Cardiac septum (tissue), 1 donor: ENCODE measurements at regions of chr5 and their contacts with region 1.

Region 1: DNA sequence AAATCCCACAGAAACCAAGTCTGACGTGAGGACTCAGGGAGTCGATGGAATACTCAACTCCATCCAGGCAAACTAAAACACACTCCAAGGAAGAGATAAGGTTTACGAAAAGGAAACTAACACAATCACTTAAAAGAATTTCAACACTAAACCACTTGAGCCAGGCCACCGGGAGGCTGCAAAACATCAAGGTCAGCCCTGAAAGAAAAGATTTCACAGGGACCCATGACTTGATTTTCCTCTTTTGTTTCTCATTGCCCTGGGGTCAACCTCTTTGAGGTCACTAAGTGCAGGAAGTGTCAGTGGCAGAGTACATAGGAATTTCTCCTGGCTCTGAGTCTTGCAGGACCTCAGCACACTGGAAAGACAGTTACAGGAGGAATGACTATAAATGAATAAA is 77.8 kb upstream of the TARS1 start:
- DNase-seq: no peak

Region 2: DNA sequence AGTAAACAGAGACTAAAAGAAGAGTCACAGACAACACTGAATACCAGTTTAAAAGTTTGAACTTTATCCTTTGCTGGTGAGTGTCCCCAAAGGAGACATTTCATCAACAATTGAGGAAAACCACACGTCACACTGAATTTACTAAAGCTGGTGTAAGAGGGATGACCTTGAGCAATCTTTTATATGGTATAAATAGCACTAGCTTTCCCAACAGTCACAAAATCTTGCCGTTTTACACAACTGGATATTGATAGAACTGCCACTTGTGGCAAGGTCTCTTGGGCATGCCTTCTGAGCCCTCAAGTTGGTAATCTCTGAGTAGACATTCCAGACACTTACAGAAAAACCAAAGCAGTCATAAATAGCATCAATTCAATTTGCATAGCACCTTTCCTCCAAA is 233.6 kb before region 1 on chr5:
- intact Hi-C with region 1: no loop called
- DNase-seq: no peak

Region 3: GRCh38 chr5:33321026-33321425 is 41.9 kb before region 1 on chr5:
- intact Hi-C with region 1: loop called (anchors 5 kb)
- DNase-seq: no peak

Region 4: GRCh38 chr5:33401482-33402390 is 38.8 kb after region 1 on chr5:
- intact Hi-C with region 1: no loop called
- DNase-seq: no peak